ENCODE measurements at regions of chr11 and their contacts with region 1.

Region 1: DNA sequence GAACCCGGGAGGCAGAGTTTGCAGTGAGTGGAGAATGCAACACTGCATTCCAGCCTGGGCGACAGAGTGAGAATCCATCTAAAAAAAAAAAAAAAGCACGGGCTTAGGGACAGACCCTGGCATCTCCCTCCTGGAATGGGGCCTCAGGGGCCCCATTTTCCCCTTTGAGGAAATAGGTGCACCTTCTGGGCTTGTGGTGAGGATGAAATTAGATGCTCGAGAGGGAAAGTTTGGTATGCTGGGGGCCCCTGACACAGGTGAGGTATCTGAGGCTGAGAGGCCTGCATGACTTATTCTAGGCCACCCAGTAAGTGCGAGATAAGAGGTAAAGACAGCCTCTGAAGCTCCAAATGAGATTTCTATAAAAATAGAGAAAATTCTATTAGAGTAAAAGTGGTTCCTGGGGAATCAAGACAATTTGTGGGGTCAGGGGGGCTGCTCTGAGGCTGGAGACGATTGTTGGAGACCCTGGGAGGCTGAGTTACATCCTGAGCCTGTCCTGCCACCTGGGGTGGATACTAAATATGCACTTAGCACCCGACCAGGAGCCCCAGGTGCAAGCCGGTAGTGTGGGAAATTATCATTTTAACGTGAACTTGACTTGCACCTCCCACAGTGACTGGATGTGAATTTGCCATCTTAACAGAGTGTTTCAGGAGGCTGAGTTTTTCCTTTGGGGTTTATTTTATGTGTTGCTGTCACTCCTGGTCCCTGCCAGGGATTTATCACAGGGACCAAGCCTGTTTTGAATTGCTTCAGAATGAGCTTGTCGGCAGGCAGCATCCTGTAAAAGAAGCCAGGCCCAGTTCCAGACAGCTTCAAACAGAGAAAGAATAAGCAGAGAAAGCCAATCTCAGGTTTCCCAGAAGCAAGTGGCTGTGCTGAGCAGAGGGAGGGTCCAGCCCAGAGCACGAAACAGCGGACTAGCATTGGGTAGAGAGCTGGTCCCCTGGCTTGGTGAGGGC is 48.4 kb upstream of the TSKU start:
- DNase-seq: no peak
- H3K4me3 ChIP-seq: no peak overlapping the region
- H3K27ac ChIP-seq: no peak overlapping the region
- H3K4me1 ChIP-seq: no peaks in the 10 kb centered on the region
- H3K27me3 ChIP-seq: no peaks in the 10 kb centered on the region
- CTCF ChIP-seq: no peak
- EP300 ChIP-seq: no peak
- POLR2A ChIP-seq: no peak

Region 2: GRCh38 chr11:75073459-75074190 is 1661.1 kb before region 1 on chr11:
- intact Hi-C with region 1: no loop called
- DNase-seq: no peak
- H3K4me3 ChIP-seq: no peak overlapping the region
- H3K27ac ChIP-seq: no peak overlapping the region
- H3K4me1 ChIP-seq: no peaks in the 10 kb centered on the region
- H3K27me3 ChIP-seq: no peaks in the 10 kb centered on the region
- CTCF ChIP-seq: no peak
- EP300 ChIP-seq: no peak
- POLR2A ChIP-seq: no peak

Region 3: GRCh38 chr11:76293189-76293631 is 441.5 kb before region 1 on chr11:
- intact Hi-C with region 1: no loop called
- DNase-seq: no peak
- H3K4me3 ChIP-seq: no peak overlapping the region
- H3K27ac ChIP-seq: no peak overlapping the region
- H3K4me1 ChIP-seq: no peaks in the 10 kb centered on the region
- H3K27me3 ChIP-seq: no peaks in the 10 kb centered on the region
- CTCF ChIP-seq: no peak
- EP300 ChIP-seq: no peak
- POLR2A ChIP-seq: no peak

Region 4: GRCh38 chr11:76782526-76783293 is 48.0 kb after region 1 on chr11:
- intact Hi-C with region 1: loop called in 1 of 4 experiments (anchors 5 kb)
- DNase-seq: peak; percentile 89 to 93 (median 92)
- H3K4me3 ChIP-seq: peak overlapping the region; percentile 94
- H3K27ac ChIP-seq: peak overlapping the region; percentile 89 to 99
- H3K4me1 ChIP-seq: peaks cover 15% of the 10 kb centered on the region
- H3K27me3 ChIP-seq: no peaks in the 10 kb centered on the region
- CTCF ChIP-seq: peak in 1 of 3 donors; percentile 20
- EP300 ChIP-seq: no peak
- POLR2A ChIP-seq: peak; percentile 34

Region 5: GRCh38 chr11:76799066-76799804 is 64.5 kb after region 1 on chr11:
- intact Hi-C with region 1: loop called (anchors 2 to 5 kb)
- DNase-seq: peak; percentile 84 to 95 (median 92)
- H3K4me3 ChIP-seq: peak overlapping the region; percentile 1
- H3K27ac ChIP-seq: peak overlapping the region; percentile 45 to 63
- H3K4me1 ChIP-seq: peaks cover 5% of the 10 kb centered on the region
- H3K27me3 ChIP-seq: no peaks in the 10 kb centered on the region
- CTCF ChIP-seq: peak; percentile 95 to 99 (median 96)
- EP300 ChIP-seq: no peak
- POLR2A ChIP-seq: no peak

Region 6: GRCh38 chr11:76835928-76836612 is 101.3 kb after region 1 on chr11:
- intact Hi-C with region 1: no loop called
- DNase-seq: no peak
- H3K4me3 ChIP-seq: no peak overlapping the region
- H3K27ac ChIP-seq: no peak overlapping the region
- H3K4me1 ChIP-seq: no peaks in the 10 kb centered on the region
- H3K27me3 ChIP-seq: no peaks in the 10 kb centered on the region
- CTCF ChIP-seq: no peak
- EP300 ChIP-seq: no peak
- POLR2A ChIP-seq: no peak

Region 7: DNA sequence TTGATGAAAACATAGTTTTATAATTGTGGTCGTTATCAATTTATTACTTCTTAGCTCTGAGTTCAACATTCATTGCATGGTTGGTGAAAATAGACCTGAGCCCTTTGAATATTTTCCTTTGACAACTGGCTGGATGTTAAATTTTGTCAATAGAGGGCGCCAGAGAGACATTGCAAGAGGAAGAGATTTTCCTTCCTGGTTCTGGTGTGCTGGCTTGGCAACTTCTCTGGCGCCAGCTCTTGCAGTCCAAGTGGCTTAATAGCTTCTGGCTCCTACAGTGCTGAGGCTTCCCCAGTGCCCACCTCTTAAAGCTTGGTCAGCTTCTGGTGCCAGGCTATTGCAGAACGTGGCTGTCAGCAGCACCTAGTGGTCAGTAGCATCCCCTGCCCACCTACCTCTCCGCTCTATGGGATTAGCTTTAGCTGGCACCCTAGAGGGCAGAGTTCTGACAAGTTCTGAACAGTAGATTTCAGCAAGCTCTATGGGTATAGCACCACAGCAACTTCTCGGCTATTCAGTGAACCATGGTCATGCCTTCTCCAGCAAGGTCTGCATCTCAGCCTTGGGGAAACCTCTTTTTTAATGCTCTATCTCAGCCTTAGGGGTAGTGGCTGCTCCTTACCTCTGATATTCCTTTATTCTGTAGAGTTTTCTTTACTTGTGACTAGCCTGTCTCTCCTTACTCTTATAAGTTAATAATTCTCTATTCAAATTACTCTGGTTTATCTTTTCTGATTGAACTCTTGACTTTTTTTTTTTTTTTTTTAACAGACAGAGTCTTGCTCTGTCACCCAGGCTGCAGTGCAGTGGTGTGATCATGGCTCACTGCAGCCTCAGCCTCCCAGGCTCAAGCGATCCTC is 185.4 kb after region 1 on chr11:
- intact Hi-C with region 1: loop called in 3 of 4 experiments (anchors 5 to 10 kb)
- DNase-seq: peak; percentile 53 to 68 (median 63)
- H3K4me3 ChIP-seq: no peak overlapping the region
- H3K27ac ChIP-seq: no peak overlapping the region
- H3K4me1 ChIP-seq: peaks cover 3% of the 10 kb centered on the region
- H3K27me3 ChIP-seq: no peaks in the 10 kb centered on the region
- CTCF ChIP-seq: peak; percentile 58 to 76 (median 70)
- EP300 ChIP-seq: no peak
- POLR2A ChIP-seq: no peak

Region 8: GRCh38 chr11:77047007-77047927 is 312.5 kb after region 1 on chr11:
- intact Hi-C with region 1: loop called in 1 of 4 experiments (anchors 10 kb)
- DNase-seq: peak; percentile 58 to 87 (median 76)
- H3K4me3 ChIP-seq: peak overlapping the region; percentile 35
- H3K27ac ChIP-seq: no peak overlapping the region
- H3K4me1 ChIP-seq: peaks cover 4% of the 10 kb centered on the region
- H3K27me3 ChIP-seq: no peaks in the 10 kb centered on the region
- CTCF ChIP-seq: peak; percentile 61 to 83 (median 82)
- EP300 ChIP-seq: no peak
- POLR2A ChIP-seq: no peak